Adrenal gland (tissue), 19 donors: ENCODE measurements at regions of chr6 and their contacts with region 1.

Region 1: DNA sequence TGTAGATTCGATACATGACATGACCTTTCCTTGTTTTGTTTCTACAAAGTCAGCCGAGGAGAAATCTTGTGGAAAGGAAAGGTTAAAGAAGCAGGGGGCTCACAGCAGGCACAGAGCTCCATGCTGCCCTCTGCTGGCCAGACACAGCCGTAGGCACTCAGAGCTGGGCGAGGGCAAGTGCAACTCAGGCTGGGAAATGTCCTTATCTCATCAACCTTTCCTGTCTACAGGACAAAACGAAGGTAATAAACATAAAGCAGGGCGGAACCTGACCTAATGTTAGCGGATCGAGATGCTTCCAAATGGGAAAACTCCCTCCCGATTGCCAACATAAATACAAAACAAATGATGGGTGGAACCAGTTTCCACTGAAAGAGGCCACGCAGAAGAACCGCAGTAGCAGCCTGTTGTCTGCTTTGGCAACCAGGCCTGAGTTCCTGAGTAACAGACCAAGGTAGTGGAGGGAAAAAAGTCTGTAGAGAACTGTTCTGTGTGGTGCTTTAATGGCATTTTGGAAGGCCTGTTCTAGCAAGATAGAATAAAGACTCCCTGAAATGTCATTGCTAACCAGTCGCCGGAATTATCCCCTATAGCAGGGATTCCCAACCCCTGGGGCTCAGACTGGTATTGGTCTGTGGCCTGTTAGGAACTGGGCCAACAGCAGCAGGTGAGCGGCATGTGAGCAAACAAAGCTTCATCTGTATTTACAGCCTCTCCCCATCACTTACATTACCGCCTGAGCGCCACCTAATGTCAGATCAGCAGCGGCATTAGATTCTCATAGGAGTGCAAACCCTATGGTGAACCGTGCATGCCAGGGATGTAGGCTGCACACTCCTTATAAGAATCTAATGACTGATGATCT is 85.2 kb downstream of the MBOAT1 start:
- DNase-seq: peak; percentile 54 to 79 (median 75)
- H3K4me3 ChIP-seq: no peak overlapping the region
- H3K27ac ChIP-seq: no peak overlapping the region
- H3K4me1 ChIP-seq: peaks cover 0 to 6% of the 10 kb centered on the region in 2 donors
- H3K27me3 ChIP-seq: no peaks in the 10 kb centered on the region
- CTCF ChIP-seq: peak; percentile 63 to 94 (median 74)
- POLR2A ChIP-seq: no peak

Region 2: DNA sequence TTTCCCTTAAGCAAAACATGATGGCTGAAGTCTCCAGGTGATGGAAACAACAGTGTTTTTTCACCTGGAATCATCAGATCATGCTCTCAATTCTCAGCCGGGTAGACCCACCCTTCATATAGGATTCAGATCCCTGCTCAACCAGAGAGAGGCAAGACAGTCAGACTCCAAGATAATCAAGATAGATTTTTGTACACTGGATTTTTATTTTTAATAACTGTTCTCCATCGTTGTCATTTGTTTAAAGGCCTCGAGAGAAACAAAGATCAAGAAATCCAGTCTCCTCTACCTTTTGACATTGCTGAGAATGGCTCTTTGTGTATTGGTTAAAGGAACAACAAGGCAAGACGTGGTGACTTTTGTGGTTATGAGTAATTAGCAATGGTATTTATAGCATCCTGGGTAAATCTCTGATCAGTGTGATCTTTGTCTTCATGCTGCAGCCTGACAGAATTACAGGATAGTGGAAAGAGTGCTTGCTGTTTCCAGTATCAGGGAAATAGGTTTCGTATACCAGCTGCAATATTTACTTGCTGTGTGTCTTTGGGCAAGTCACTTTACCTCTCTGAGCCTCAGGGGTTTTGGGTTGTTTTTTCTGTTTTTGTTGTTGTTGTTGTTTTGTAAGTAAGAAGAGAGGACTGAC is 259.9 kb before region 1 on chr6:
- intact Hi-C with region 1: no loop called
- DNase-seq: no peak
- H3K4me3 ChIP-seq: no peak overlapping the region
- H3K27ac ChIP-seq: no peak overlapping the region
- H3K4me1 ChIP-seq: no peaks in the 10 kb centered on the region
- H3K27me3 ChIP-seq: no peaks in the 10 kb centered on the region
- CTCF ChIP-seq: no peak
- POLR2A ChIP-seq: no peak

Region 3: GRCh38 chr6:20202324-20202658 is 75.3 kb after region 1 on chr6:
- intact Hi-C with region 1: loop called in 1 of 2 experiments (anchors 10 kb)
- DNase-seq: no peak
- H3K4me3 ChIP-seq: peak overlapping the region in 1 of 4 donors; percentile 1
- H3K27ac ChIP-seq: peak overlapping the region in 2 of 5 donors; percentile 24 to 58
- H3K4me1 ChIP-seq: peaks cover 20 to 50% of the 10 kb centered on the region in 2 donors
- H3K27me3 ChIP-seq: no peaks in the 10 kb centered on the region
- CTCF ChIP-seq: no peak
- POLR2A ChIP-seq: no peak

Region 4: GRCh38 chr6:20212392-20213217 is 85.6 kb after region 1 on chr6 and contains the start of gene MBOAT1:
- intact Hi-C with region 1: loop called (anchors 10 kb)
- DNase-seq: peak; percentile 88 to 94 (median 92)
- H3K4me3 ChIP-seq: peak within 1 kb of the TSS in 3 of 4 donors; percentile 38 to 89 (median 83)
- H3K27ac ChIP-seq: peak within 1 kb of the TSS; percentile 78 to 94 (median 89)
- H3K4me1 ChIP-seq: peaks cover 12 to 29% of the 10 kb centered on the region in 2 donors
- H3K27me3 ChIP-seq: no peaks in the 10 kb centered on the region
- CTCF ChIP-seq: peak in 1 of 6 experiments; percentile 30
- POLR2A ChIP-seq: peak; percentile 35 to 89
- total RNA-seq, gene MBOAT1: 1.5 to 18.9 (median 9.5) TPM